A549 (cell line): ENCODE measurements at regions of chr1 and their contacts with region 1.

Region 1: GRCh38 chr1:109643385-109644230 is 12.3 kb upstream of the GSTM4 start:
- DNase-seq: peak; percentile 59 to 75
- ATAC-seq: peak; percentile 96 to 98
- H3K4me3 ChIP-seq: no peak overlapping the region
- H3K27ac ChIP-seq: peak overlapping the region; percentile 73 to 80
- H3K4me1 ChIP-seq: peaks cover 9% of the 10 kb centered on the region; the same call in 2 of the 3 replicates
- CTCF ChIP-seq: peak; percentile 76
- EP300 ChIP-seq: no peak
- POLR2A ChIP-seq: no peak
- RAD21 ChIP-seq: peak; percentile 67 to 74

Region 2: GRCh38 chr1:109541102-109541501 is 102.5 kb before region 1 on chr1:
- CTCF ChIA-PET with region 1: interaction called, 73 read pairs
- POLR2A ChIA-PET with region 1: interaction called, 7 read pairs
- DNase-seq: no peak
- ATAC-seq: no peak
- H3K4me3 ChIP-seq: no peak overlapping the region
- H3K27ac ChIP-seq: no peak overlapping the region
- H3K4me1 ChIP-seq: no peaks in the 10 kb centered on the region
- CTCF ChIP-seq: no peak
- EP300 ChIP-seq: no peak
- POLR2A ChIP-seq: no peak
- RAD21 ChIP-seq: no peak

Region 3: DNA sequence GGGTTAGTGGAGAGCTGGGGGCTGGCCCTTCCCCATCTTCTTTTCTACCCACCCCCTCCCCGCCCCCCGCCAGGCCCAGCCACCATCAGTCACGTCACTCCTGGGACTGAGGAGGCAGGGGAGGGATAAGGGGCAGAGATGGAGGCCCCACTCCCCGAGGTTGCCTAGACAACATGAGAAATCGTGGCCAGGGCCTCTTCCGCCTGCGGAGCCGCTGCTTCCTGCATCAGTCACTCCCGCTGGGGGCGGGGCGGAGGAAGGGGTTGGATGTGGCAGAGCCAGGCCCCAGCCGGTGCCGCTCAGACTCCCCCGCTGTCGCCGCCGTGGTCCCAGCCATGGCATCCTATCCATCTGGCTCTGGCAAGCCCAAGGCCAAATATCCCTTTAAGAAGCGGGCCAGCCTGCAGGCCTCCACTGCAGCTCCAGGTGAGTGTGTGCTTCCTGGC is 22.7 kb before region 1 on chr1:
- CTCF ChIA-PET with region 1: interaction called, 15 read pairs
- POLR2A ChIA-PET with region 1: no interaction called
- DNase-seq: peak; percentile 87 to 92
- ATAC-seq: peak; percentile 82 to 88
- H3K4me3 ChIP-seq: peak overlapping the region; percentile 90
- H3K27ac ChIP-seq: peak overlapping the region; percentile 93 to 98
- H3K4me1 ChIP-seq: peaks cover 31% of the 10 kb centered on the region
- CTCF ChIP-seq: no peak
- EP300 ChIP-seq: no peak
- POLR2A ChIP-seq: no peak
- RAD21 ChIP-seq: no peak

Region 4: DNA sequence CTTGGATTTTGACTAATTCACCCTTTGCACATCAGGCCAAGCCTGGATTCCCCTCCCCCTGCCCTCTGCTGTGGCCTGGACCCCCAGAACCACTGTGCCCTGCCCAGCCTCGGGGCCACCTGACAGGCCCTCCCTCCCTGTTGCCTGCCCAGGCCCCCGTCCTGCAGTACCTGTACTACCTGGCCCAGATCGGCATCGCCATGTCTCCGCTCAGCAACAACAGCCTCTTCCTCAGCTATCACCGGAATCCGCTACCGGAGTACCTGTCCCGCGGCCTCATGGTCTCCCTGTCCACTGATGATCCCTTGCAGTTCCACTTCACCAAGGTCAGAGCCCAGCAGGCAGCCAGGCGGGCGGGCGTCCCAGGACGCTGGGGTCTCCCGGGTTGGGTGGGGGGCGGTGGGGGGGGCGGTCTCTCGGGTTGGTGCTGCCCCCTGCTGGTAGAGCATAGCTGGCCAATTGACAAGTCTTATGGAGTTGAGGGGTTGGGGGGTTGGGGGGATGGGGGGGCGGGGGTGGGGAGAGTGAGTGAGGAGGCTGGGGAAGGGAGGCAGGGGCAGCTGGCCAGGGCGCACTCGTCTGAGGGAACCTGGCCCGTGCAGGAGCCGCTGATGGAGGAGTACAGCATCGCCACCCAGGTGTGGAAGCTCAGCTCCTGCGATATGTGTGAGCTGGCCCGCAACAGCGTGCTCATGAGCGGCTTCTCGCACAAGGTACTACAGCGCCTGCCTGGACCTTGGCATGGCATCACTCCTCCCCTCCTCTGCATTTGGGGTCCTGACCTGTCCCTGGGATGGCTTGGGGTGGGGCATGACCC is 13.3 kb before region 1 on chr1:
- CTCF ChIA-PET with region 1: interaction called, 187 read pairs
- POLR2A ChIA-PET with region 1: no interaction called
- DNase-seq: no peak
- ATAC-seq: peak in 1 of 2 experiments; percentile 10; a peak in 2 of 6 replicates
- H3K4me3 ChIP-seq: no peak overlapping the region
- H3K27ac ChIP-seq: no peak overlapping the region
- H3K4me1 ChIP-seq: peaks cover 16% of the 10 kb centered on the region
- CTCF ChIP-seq: peak; percentile 31; the same call in 1 of the 3 replicates
- EP300 ChIP-seq: no peak
- POLR2A ChIP-seq: no peak
- RAD21 ChIP-seq: no peak; a peak in 2 of 5 replicates

Region 5: GRCh38 chr1:109655601-109656519 is 12.3 kb after region 1 on chr1 and contains the start of gene GSTM4:
- CTCF ChIA-PET with region 1: interaction called, 187 read pairs
- POLR2A ChIA-PET with region 1: no interaction called
- DNase-seq: peak; percentile 53 to 60
- ATAC-seq: peak; percentile 95 to 96
- H3K4me3 ChIP-seq: peak within 1 kb of the TSS; percentile 73
- H3K27ac ChIP-seq: peak within 1 kb of the TSS; percentile 77 to 89
- H3K4me1 ChIP-seq: peaks cover 5% of the 10 kb centered on the region; the same call in 1 of the 3 replicates
- CTCF ChIP-seq: no peak
- EP300 ChIP-seq: no peak
- POLR2A ChIP-seq: 0 out of 2 replicates have a peak, but pooled peaks have one; percentile 17
- RAD21 ChIP-seq: no peak
- polyA plus RNA-seq, gene GSTM4: 17.2 and 21.7 TPM in 2 replicates